ENCODE measurements at regions of chr10 and their contacts with region 1.

Region 1: DNA sequence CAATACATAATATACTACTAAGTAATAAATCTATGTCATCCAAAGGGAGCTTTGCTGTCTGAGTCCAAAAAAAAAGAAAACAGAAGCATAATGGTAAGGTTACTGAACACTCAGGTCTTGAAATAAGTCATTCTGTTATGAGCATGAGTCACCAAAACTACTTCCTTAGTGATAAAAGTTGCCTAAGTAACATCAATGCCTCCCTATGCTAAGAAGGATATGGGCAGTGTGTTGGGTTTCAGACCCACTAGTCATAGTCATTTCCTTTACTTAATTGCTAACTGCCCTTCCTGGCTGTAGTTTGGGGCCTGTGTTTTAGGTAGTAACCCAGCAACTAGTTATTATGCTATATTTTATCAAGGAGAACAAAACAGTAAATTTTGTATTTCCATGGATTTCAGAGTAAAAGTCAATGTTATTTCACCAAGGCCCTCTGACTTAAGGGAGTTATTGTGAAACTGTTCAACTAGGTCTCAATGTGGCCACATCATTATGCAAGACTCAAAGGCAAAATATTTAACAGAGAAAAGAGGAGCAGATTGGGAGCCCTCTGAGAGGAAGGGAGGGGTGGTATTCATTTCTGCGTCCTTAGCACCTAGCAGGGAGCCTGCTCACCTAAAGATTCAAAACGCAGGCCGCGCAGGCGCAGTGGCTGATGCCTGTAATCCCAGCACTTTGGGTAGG is 11.7 kb upstream of the VIM start:
- DNase-seq: peak; percentile 98
- H3K4me3 ChIP-seq: peak overlapping the region in 1 of 3 experiments; percentile 3
- H3K27ac ChIP-seq: peak overlapping the region; percentile 99
- H3K4me1 ChIP-seq: peaks cover 33% of the 10 kb centered on the region
- H3K27me3 ChIP-seq: no peaks in the 10 kb centered on the region
- CTCF ChIP-seq: no peak
- POLR2A ChIP-seq: peak; percentile 77

Region 2: DNA sequence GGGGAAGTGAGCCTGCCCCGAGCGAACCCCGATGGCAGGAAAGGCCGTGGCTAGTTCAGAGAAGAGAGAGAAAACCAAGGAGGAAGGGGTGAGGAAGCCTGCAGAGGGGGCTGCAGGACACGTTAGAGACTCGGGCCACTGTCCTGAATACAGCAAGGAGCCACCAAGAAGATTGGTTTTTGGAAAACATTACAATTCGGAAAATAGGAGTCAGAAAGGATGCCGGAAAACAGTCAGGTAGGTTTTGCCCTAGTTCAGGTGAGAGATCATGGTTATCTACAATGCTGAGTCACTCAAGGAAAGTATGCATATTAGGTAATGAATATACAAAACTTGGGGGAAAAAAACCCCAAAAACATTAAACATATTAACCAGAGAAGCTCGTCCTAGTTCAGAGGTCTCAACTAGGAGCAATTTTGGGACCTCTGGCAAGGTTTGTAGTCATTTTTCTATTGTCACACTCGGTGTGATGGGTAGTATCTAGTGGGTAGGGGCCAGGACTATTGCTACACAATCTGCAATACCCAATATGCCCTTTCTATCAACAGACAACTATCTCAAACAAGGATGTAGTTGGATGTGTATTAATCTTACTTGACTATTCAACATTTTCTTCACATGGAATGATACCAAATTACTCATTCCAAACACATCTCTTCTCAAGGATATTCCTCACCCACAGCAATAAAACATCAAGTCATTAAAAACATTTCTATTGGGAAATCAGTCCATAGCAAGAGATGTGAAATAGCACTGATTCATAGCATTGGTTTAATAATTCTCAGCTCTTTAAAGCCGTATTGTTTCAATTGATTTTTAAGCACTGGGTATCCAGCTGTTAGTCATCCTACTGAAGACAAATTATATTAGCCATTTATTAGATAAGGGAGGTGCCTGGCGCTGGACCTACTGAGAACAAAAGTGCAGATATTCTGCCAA is 324.7 kb before region 1 on chr10:
- CTCF ChIA-PET with region 1: interaction called, 5 read pairs
- POLR2A ChIA-PET with region 1: no interaction called
- dilution Hi-C with region 1: no loop called
- intact Hi-C with region 1: loop called (anchors 1 kb)
- DNase-seq: peak; percentile 70
- H3K4me3 ChIP-seq: no peak overlapping the region
- H3K27ac ChIP-seq: peak overlapping the region; percentile 5
- H3K4me1 ChIP-seq: peaks cover 8% of the 10 kb centered on the region
- H3K27me3 ChIP-seq: no peaks in the 10 kb centered on the region
- CTCF ChIP-seq: peak; percentile 45 to 58
- POLR2A ChIP-seq: peak; percentile 94

Region 3: GRCh38 chr10:17029581-17030271 is 186.6 kb before region 1 on chr10:
- CTCF ChIA-PET with region 1: no interaction called
- POLR2A ChIA-PET with region 1: no interaction called
- dilution Hi-C with region 1: no loop called
- intact Hi-C with region 1: loop called (anchors 1 kb)
- DNase-seq: peak; percentile 96
- H3K4me3 ChIP-seq: peak overlapping the region in 1 of 3 experiments; percentile 34
- H3K27ac ChIP-seq: peak overlapping the region; percentile 99
- H3K4me1 ChIP-seq: peaks cover 59% of the 10 kb centered on the region
- H3K27me3 ChIP-seq: no peaks in the 10 kb centered on the region
- CTCF ChIP-seq: no peak
- POLR2A ChIP-seq: peak; percentile 71

Region 4: GRCh38 chr10:17075533-17076359 is 140.6 kb before region 1 on chr10:
- CTCF ChIA-PET with region 1: no interaction called
- POLR2A ChIA-PET with region 1: interaction called, 3 read pairs
- dilution Hi-C with region 1: no loop called
- intact Hi-C with region 1: loop called (anchors 1 kb)
- DNase-seq: peak; percentile 89
- H3K4me3 ChIP-seq: no peak overlapping the region
- H3K27ac ChIP-seq: peak overlapping the region; percentile 95
- H3K4me1 ChIP-seq: peaks cover 49% of the 10 kb centered on the region
- H3K27me3 ChIP-seq: no peaks in the 10 kb centered on the region
- CTCF ChIP-seq: no peak
- POLR2A ChIP-seq: no peak

Region 5: GRCh38 chr10:17113889-17114540 is 102.3 kb before region 1 on chr10:
- CTCF ChIA-PET with region 1: no interaction called
- POLR2A ChIA-PET with region 1: no interaction called
- dilution Hi-C with region 1: no loop called
- intact Hi-C with region 1: loop called (anchors 1 kb)
- DNase-seq: peak; percentile 46
- H3K4me3 ChIP-seq: no peak overlapping the region
- H3K27ac ChIP-seq: no peak overlapping the region
- H3K4me1 ChIP-seq: peaks cover 20% of the 10 kb centered on the region
- H3K27me3 ChIP-seq: no peaks in the 10 kb centered on the region
- CTCF ChIP-seq: no peak
- POLR2A ChIP-seq: no peak